HEK293T (cell line): ENCODE measurements at regions of chrX and their contacts with region 1.

Region 1: DNA sequence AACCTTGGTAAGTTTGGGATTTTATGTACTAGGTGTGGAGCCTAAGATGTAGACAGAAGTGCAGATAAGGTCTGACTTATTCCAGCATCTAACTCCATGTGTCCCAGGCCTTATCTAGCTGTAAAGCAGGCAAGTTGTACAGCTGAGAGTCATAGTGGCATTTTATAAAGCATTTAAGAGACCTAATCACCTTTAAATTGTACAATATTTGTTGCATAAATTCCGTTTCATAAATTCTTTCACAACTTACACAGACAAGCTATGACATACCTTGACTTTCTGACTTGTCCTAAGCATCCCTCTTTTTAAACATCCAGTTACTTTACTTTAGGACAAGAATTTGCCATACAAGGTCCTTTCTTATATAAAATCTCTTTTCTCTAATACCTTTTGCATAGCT is 11.0 kb downstream of the SYAP1 start:
- DNase-seq: no peak

Region 2: GRCh38 chrX:16695079-16695676 is 35.3 kb before region 1 on chrX:
- CTCF ChIA-PET with region 1: no interaction called
- POLR2A ChIA-PET with region 1: no interaction called
- DNase-seq: peak; percentile 67

Region 3: GRCh38 chrX:16719334-16720084 is 10.9 kb before region 1 on chrX and contains the start of gene SYAP1:
- CTCF ChIA-PET with region 1: no interaction called
- POLR2A ChIA-PET with region 1: interaction called, 11 read pairs
- DNase-seq: peak; percentile 92